CD8-positive, alpha-beta T cell (primary cell): ENCODE measurements at regions of chr1 and their contacts with region 1.

Region 1: DNA sequence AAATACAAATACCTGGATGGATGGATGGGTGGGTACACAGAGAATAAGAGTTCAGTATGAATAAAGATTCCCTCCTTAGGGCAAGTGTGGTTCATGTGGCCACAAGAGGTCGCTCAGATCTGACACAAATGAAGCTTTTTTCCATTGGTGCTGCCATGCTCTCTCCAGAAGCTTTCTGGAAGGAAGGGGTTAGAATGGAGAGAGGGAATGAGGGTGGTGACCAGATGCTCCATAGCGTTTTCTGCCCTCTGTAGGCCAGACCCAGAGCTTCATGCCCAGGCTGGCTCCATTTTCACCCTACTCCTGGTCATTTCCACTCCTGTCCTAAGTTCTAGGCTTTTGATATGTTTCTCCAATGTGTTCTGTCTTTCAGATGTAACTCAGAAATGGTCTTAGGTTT is 3.3 kb upstream of the FCRL6 start:
- DNase-seq: peak; percentile 6 to 77 (median 46)
- ATAC-seq: no peak
- H3K4me3 ChIP-seq: no peak overlapping the region
- H3K4me3 Mint-ChIP-seq: no peak overlapping the region
- H3K27ac ChIP-seq: no peak overlapping the region
- H3K27ac Mint-ChIP-seq: no peak overlapping the region
- H3K4me1 ChIP-seq: peaks cover 22% of the 10 kb centered on the region
- H3K4me1 Mint-ChIP-seq: peaks cover 46% of the 10 kb centered on the region
- H3K27me3 ChIP-seq: no peaks in the 10 kb centered on the region
- H3K27me3 Mint-ChIP-seq: peaks cover 1% of the 10 kb centered on the region
- CTCF ChIP-seq: peak; percentile 68

Region 2: DNA sequence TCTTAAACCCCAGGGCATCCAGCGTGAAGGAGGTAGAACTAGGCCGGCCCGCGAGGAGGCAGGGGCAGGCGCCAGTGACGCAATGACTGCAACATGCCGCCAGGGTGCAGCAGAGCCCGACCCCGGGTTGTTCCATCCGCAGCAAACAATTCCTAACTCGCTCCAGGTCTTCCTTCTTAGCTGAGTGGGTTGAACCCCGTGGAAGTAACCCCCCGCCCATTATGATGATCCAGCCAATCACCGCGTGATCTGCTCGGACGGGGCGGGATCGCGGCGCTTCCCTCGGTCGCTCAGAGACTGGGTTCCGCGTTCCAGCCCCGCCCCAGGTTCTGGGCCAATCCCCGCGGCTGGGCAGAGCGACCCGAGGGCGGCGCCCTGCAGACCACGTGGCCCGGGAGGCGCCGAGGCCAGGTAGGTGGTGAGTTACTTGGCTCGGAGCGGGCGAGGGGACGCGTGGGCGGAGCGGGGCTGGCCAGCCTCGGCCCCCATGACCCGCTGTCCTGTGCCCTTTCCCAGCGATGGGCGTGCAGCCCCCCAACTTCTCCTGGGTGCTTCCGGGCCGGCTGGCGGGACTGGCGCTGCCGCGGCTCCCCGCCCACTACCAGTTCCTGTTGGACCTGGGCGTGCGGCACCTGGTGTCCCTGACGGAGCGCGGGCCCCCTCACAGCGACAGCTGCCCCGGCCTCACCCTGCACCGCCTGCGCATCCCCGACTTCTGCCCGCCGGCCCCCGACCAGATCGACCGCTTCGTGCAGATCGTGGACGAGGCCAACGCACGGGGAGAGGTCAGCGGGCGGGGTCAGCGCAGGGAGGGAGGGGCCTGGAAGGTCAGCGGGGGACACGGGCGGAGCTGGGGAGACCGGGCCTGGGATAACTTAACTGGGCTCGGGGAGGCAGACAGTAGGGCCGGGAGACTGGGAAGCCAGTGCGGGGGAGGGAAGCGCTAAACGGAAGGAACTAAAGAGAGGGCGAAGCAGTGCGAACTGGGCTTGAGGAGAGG is 18.0 kb before region 1 on chr1 and contains the start of gene DUSP23:
- CTCF ChIA-PET with region 1: interaction called, 50 read pairs
- POLR2A ChIA-PET with region 1: interaction called, 4 read pairs
- intact Hi-C with region 1: loop called in 1 of 2 experiments (anchors 1 kb)
- DNase-seq: peak; percentile 90 to 98 (median 95)
- ATAC-seq: peak; percentile 96
- H3K4me3 ChIP-seq: peak within 1 kb of the TSS; percentile 59 to 69
- H3K4me3 Mint-ChIP-seq: peak within 1 kb of the TSS; percentile 89
- H3K27ac ChIP-seq: peak within 1 kb of the TSS; percentile 16 to 62
- H3K27ac Mint-ChIP-seq: peak within 1 kb of the TSS; percentile 89
- H3K4me1 ChIP-seq: peaks cover 10% of the 10 kb centered on the region
- H3K4me1 Mint-ChIP-seq: peaks cover 28% of the 10 kb centered on the region
- H3K27me3 ChIP-seq: no peaks in the 10 kb centered on the region
- H3K27me3 Mint-ChIP-seq: no peaks in the 10 kb centered on the region
- CTCF ChIP-seq: peak; percentile 78
- total RNA-seq, gene DUSP23: 3.8 to 6.3 TPM

Region 3: DNA sequence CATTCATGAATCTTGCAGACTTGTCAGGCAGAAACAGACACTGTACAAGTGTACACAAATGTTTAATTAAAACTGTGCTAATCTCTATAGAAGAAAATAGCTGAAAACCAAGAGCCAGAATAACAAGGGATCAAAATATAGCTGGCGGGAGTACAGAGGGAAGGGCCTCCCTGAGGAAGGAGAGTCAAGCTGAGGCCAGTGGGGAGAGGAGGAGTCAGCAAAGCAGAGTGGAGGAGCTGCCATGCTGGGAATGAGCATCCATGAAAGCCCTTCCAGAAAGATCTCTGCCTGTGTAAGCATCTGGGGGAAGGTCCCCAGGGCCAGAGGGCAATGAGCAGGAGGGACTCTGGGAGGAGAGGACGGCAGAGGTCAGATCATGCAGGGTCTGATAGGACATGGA is 42.9 kb after region 1 on chr1:
- CTCF ChIA-PET with region 1: interaction called, 12 read pairs
- POLR2A ChIA-PET with region 1: no interaction called
- intact Hi-C with region 1: no loop called
- DNase-seq: no peak
- ATAC-seq: no peak
- H3K4me3 ChIP-seq: no peak overlapping the region
- H3K4me3 Mint-ChIP-seq: no peak overlapping the region
- H3K27ac ChIP-seq: no peak overlapping the region
- H3K27ac Mint-ChIP-seq: no peak overlapping the region
- H3K4me1 ChIP-seq: no peaks in the 10 kb centered on the region
- H3K4me1 Mint-ChIP-seq: peaks cover 7% of the 10 kb centered on the region
- H3K27me3 ChIP-seq: no peaks in the 10 kb centered on the region
- H3K27me3 Mint-ChIP-seq: no peaks in the 10 kb centered on the region
- CTCF ChIP-seq: no peak

Region 4: GRCh38 chr1:159867683-159868064 is 68.8 kb after region 1 on chr1:
- CTCF ChIA-PET with region 1: interaction called, 17 read pairs
- POLR2A ChIA-PET with region 1: no interaction called
- intact Hi-C with region 1: no loop called
- DNase-seq: no peak
- ATAC-seq: no peak
- H3K4me3 ChIP-seq: no peak overlapping the region
- H3K4me3 Mint-ChIP-seq: no peak overlapping the region
- H3K27ac ChIP-seq: no peak overlapping the region
- H3K27ac Mint-ChIP-seq: no peak overlapping the region
- H3K4me1 ChIP-seq: peaks cover 10% of the 10 kb centered on the region
- H3K4me1 Mint-ChIP-seq: peaks cover 21% of the 10 kb centered on the region
- H3K27me3 ChIP-seq: no peaks in the 10 kb centered on the region
- H3K27me3 Mint-ChIP-seq: peaks cover 8% of the 10 kb centered on the region
- CTCF ChIP-seq: no peak

Region 5: DNA sequence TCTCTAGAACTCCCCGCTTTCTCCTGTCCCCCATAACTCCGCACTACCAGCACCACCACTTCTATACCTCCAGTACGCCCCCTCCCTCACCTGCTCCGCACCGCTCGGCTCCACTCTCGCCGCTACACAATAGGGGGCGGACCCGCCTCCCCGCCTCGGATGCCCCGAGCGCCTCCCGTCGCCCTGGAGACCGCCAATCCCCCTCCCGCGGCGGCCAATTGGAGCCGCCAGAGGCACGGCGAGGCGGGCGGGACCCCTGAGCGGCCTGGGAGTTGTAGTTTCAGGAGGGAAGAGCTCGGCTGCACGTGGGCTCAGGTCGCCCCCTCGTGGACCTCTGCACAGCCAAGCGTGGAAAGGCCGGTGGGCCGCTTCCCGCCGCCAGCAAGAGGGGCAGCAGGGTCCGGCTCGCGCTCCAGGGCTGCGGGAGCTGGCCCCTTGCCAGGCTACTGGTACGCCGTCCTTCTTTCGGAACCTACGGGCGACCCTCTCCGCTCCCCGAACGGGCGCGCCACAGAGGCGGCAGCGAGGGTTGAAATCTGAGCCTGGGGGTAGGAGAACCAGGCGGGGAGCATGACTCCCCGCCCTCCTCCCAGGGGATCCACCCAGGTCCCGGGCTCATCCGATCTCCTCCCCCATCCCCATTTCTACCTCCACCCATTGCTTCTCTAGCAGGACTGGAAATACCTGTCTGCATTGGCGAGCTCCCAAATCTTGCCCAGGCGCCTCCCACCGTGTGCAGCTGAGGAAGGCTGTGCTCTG is 146.8 kb after region 1 on chr1 and contains the start of gene IGSF9:
- CTCF ChIA-PET with region 1: interaction called, 9 read pairs
- POLR2A ChIA-PET with region 1: no interaction called
- intact Hi-C with region 1: loop called (anchors 1 to 5 kb)
- DNase-seq: peak; percentile 67 to 92 (median 86)
- ATAC-seq: peak; percentile 97
- H3K4me3 ChIP-seq: peak within 1 kb of the TSS; percentile 13 to 32
- H3K4me3 Mint-ChIP-seq: peak within 1 kb of the TSS; percentile 68
- H3K27ac ChIP-seq: no peak within 1 kb of the TSS
- H3K27ac Mint-ChIP-seq: no peak within 1 kb of the TSS
- H3K4me1 ChIP-seq: peaks cover 12% of the 10 kb centered on the region
- H3K4me1 Mint-ChIP-seq: peaks cover 13% of the 10 kb centered on the region
- H3K27me3 ChIP-seq: peaks cover 5 to 16% of the 10 kb centered on the region in 2 experiments
- H3K27me3 Mint-ChIP-seq: peaks cover 26% of the 10 kb centered on the region
- CTCF ChIP-seq: peak; percentile 67
- total RNA-seq, gene IGSF9: not detected